ENCODE measurements at regions of chr9 and their contacts with region 1.

Region 1: GRCh38 chr9:78121488-78121887 is 89.9 kb upstream of the GNAQ start:
- DNase-seq: peak; percentile 79
- ATAC-seq: no peak
- H3K4me3 Mint-ChIP-seq: no peak overlapping the region
- H3K27ac Mint-ChIP-seq: no peak overlapping the region
- H3K4me1 Mint-ChIP-seq: peaks cover 37% of the 10 kb centered on the region
- H3K27me3 Mint-ChIP-seq: no peaks in the 10 kb centered on the region

Region 2: GRCh38 chr9:76773036-76773435 is 1348.5 kb before region 1 on chr9:
- CTCF ChIA-PET with region 1: no interaction called
- POLR2A ChIA-PET with region 1: no interaction called
- intact Hi-C with region 1: no loop called
- DNase-seq: no peak
- ATAC-seq: no peak
- H3K4me3 Mint-ChIP-seq: no peak overlapping the region
- H3K27ac Mint-ChIP-seq: no peak overlapping the region
- H3K4me1 Mint-ChIP-seq: no peaks in the 10 kb centered on the region
- H3K27me3 Mint-ChIP-seq: peaks cover 2% of the 10 kb centered on the region

Region 3: DNA sequence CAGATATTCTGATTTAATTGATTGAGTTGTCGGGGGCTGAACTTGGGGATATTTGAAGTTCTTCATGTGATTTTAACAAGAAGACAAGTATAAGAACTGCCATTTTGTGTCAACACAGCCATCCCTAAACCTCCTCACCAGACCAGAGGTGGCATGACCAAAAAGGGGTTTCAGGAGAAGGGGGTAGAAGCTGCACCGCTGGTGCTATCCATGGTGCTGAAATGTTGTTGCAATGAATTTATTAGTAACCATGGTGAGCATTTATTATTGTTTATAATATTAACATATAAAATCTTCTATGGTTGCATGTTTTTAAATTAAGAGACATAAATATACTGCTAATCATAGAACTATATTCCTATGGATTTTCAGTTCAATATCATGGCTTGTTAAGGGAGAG is 545.7 kb before region 1 on chr9:
- CTCF ChIA-PET with region 1: no interaction called
- POLR2A ChIA-PET with region 1: no interaction called
- intact Hi-C with region 1: no loop called
- DNase-seq: peak; percentile 41
- ATAC-seq: no peak
- H3K4me3 Mint-ChIP-seq: no peak overlapping the region
- H3K27ac Mint-ChIP-seq: no peak overlapping the region
- H3K4me1 Mint-ChIP-seq: no peaks in the 10 kb centered on the region
- H3K27me3 Mint-ChIP-seq: peaks cover 3% of the 10 kb centered on the region

Region 4: GRCh38 chr9:77841739-77842386 is 279.6 kb before region 1 on chr9:
- CTCF ChIA-PET with region 1: no interaction called
- POLR2A ChIA-PET with region 1: no interaction called
- intact Hi-C with region 1: loop called in 1 of 2 experiments (anchors 10 kb)
- DNase-seq: no peak
- ATAC-seq: peak; percentile 57
- H3K4me3 Mint-ChIP-seq: no peak overlapping the region
- H3K27ac Mint-ChIP-seq: no peak overlapping the region
- H3K4me1 Mint-ChIP-seq: peaks cover 11% of the 10 kb centered on the region
- H3K27me3 Mint-ChIP-seq: no peaks in the 10 kb centered on the region